ENCODE measurements at regions of chr18 and their contacts with region 1.

Region 1: DNA sequence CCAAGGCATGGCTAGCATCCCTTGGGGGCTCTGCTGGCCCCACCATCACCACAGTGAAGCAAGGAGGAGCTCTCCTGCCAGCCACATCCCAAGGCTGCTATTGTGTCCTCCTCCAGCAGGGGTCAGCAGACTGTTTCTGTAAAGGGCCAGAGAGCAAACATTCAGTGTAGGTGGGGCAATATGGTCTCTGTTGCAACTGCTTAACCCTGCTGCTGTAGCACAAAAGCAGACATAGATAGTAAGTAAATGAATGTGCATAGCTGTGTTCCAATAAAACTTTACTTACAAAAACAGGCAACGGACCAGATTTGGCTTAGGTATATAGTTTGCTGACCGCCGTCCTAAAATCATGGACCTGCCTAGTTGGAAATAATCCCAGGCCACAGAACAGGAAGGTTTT is 36.4 kb upstream of the ZBTB7C start:
- DNase-seq: peak; percentile 41
- ATAC-seq: peak; percentile 82
- H3K4me3 Mint-ChIP-seq: no peak overlapping the region
- H3K27ac Mint-ChIP-seq: no peak overlapping the region
- H3K4me1 Mint-ChIP-seq: peaks cover 2% of the 10 kb centered on the region
- H3K27me3 Mint-ChIP-seq: peaks cover 14% of the 10 kb centered on the region
- CTCF ChIP-seq: no peak

Region 2: GRCh38 chr18:48030616-48031480 is 414.7 kb before region 1 on chr18:
- CTCF ChIA-PET with region 1: no interaction called
- POLR2A ChIA-PET with region 1: no interaction called
- intact Hi-C with region 1: loop called (anchors 1 kb)
- DNase-seq: no peak
- ATAC-seq: no peak
- H3K4me3 Mint-ChIP-seq: no peak overlapping the region
- H3K27ac Mint-ChIP-seq: no peak overlapping the region
- H3K4me1 Mint-ChIP-seq: no peaks in the 10 kb centered on the region
- H3K27me3 Mint-ChIP-seq: peaks cover 5% of the 10 kb centered on the region
- CTCF ChIP-seq: no peak

Region 3: GRCh38 chr18:48203961-48204666 is 241.4 kb before region 1 on chr18:
- CTCF ChIA-PET with region 1: no interaction called
- POLR2A ChIA-PET with region 1: no interaction called
- intact Hi-C with region 1: no loop called
- DNase-seq: no peak
- ATAC-seq: no peak
- H3K4me3 Mint-ChIP-seq: no peak overlapping the region
- H3K27ac Mint-ChIP-seq: no peak overlapping the region
- H3K4me1 Mint-ChIP-seq: no peaks in the 10 kb centered on the region
- H3K27me3 Mint-ChIP-seq: peaks cover 23% of the 10 kb centered on the region
- CTCF ChIP-seq: no peak

Region 4: GRCh38 chr18:48600456-48601090 is 155.0 kb after region 1 on chr18:
- CTCF ChIA-PET with region 1: no interaction called
- POLR2A ChIA-PET with region 1: no interaction called
- intact Hi-C with region 1: no loop called
- DNase-seq: no peak
- ATAC-seq: no peak
- H3K4me3 Mint-ChIP-seq: no peak overlapping the region
- H3K27ac Mint-ChIP-seq: no peak overlapping the region
- H3K4me1 Mint-ChIP-seq: no peaks in the 10 kb centered on the region
- H3K27me3 Mint-ChIP-seq: no peaks in the 10 kb centered on the region
- CTCF ChIP-seq: no peak

Measured in activated B cell treated with CpG ODN at 0.5 μM for 24 hours (primary cell).